ENCODE measurements at regions of chr7 and their contacts with region 1.

Region 1: GRCh38 chr7:134140889-134141867 is 14.0 kb downstream of the LRGUK start:
- DNase-seq: peak; percentile 75

Region 2: GRCh38 chr7:133191787-133192186 is 949.4 kb before region 1 on chr7:
- CTCF ChIA-PET with region 1: no interaction called
- POLR2A ChIA-PET with region 1: no interaction called
- DNase-seq: no peak

Region 3: DNA sequence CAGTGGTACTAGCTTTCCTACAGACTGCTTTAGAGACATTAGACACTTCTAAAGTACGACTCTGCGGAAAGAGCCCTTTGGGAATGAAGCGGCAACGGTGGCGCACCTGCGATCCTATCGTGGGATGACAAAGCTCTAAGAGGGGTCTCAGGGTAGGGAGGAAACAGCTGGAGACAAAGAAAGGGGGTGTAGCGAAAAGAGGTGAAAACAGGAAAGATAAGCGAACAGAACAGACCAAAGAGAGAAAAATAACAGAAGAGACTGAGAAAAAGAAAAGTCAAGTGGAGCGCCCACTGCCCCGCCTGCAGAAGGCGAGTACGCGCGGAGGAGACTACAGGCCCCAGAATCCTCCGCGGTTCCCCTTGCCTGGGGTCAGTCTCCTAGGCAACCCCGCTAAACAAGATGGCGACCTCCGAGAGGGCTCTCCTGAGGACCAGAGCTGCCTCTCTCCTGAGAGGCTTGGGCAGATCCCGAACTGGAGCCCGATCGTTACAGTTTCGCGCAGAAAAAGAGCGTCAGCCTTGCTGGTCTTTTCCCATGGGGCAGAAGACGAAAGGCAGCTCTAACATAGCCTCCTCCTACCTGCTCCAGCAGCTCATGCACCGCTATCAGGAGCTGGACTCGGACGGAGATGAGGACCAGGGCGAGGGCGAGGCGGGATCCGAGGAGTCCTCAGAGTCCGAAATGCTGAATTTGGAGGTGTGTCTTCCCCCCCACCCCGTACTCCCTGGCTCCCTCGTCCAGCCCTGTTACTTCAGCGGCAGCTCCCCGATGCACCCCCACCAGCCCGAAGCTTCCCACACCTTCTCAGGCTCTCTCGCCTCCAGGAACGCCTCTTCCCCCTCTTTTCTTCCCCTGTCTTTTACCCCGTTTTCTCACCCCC is 14.0 kb before region 1 on chr7 and contains the start of gene LRGUK:
- CTCF ChIA-PET with region 1: interaction called, 15 read pairs
- POLR2A ChIA-PET with region 1: no interaction called
- DNase-seq: peak; percentile 91